ENCODE measurements at regions of chr7 and their contacts with region 1.

Region 1: GRCh38 chr7:7959979-7960670 is 8.5 kb upstream of the GLCCI1 start:
- DNase-seq: peak; percentile 79
- ATAC-seq: peak; percentile 94
- H3K4me3 ChIP-seq: no peak overlapping the region
- H3K27ac ChIP-seq: peak overlapping the region; percentile 43; the same call in 1 of the 2 replicates
- H3K4me1 ChIP-seq: peaks cover 42% of the 10 kb centered on the region
- H3K27me3 ChIP-seq: no peaks in the 10 kb centered on the region
- CTCF ChIP-seq: no peak
- EP300 ChIP-seq: peak; percentile 9 to 48; a peak in 1 of 4 replicates
- POLR2A ChIP-seq: no peak
- RAD21 ChIP-seq: peak; percentile 19; the same call in 1 of the 2 replicates

Region 2: DNA sequence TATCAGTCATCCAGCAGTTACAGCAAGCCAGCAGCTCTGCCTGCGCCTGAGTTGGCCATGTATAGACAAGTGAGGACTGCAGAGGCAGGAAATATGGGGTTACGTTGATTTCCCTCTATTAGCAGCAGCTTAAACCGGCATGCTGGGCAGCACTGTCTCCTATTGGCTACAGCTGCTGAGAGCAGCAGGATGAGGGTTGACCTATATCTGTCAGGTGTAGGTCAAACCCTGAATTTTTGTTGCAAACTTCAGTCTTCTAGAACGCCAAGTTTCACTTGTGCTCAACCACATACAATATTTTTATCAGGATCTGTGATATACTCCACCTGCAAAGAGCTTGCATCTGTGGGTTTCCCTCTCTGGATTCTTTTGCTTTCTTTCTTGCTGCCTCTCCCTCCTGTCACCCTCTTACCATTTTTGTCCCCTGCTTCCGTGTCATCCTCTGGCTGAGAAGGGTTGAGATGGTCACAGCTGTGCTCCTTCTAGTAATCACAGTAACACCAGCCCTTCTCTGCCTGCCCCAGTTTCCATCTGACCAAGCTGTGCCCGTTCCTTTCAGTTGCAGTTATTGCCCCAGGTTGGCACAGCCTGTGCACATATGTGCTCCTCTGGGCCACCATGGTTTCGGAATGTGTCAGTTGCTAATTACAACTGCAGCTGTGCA is 15.4 kb before region 1 on chr7:
- CTCF ChIA-PET with region 1: interaction called, 14 read pairs
- POLR2A ChIA-PET with region 1: interaction called, 3 read pairs
- RAD21 ChIA-PET with region 1: interaction called, 80 read pairs
- SMC1A ChIA-PET with region 1: interaction called, 132 read pairs
- in situ Hi-C with region 1: no loop called
- intact Hi-C with region 1: no loop called
- DNase-seq: peak; percentile 99
- ATAC-seq: peak; percentile 95
- H3K4me3 ChIP-seq: peak overlapping the region; percentile 52
- H3K27ac ChIP-seq: peak overlapping the region; percentile 78
- H3K4me1 ChIP-seq: peaks cover 15% of the 10 kb centered on the region
- H3K27me3 ChIP-seq: no peaks in the 10 kb centered on the region
- CTCF ChIP-seq: 0 out of 6 replicates have a peak, but pooled peaks of 1 of the 3 experiments have one; percentile 7
- EP300 ChIP-seq: peak; percentile 78 to 85
- POLR2A ChIP-seq: peak; percentile 54
- RAD21 ChIP-seq: peak; percentile 46